Activated CD8-positive, alpha-beta T cell treated with anti-CD3 and anti-CD28 coated beads for 36 hours (primary cell): ENCODE measurements at regions of chr21 and their contacts with region 1.

Region 1: GRCh38 chr21:42537106-42537742 is 23.6 kb downstream of the SLC37A1 start:
- DNase-seq: peak; percentile 55
- ATAC-seq: peak; percentile 87
- H3K4me3 Mint-ChIP-seq: no peak overlapping the region
- H3K27ac Mint-ChIP-seq: no peak overlapping the region
- H3K4me1 Mint-ChIP-seq: peaks cover 12% of the 10 kb centered on the region
- H3K27me3 Mint-ChIP-seq: no peaks in the 10 kb centered on the region
- CTCF ChIP-seq: no peak

Region 2: GRCh38 chr21:42467140-42467983 is 69.9 kb before region 1 on chr21:
- CTCF ChIA-PET with region 1: interaction called, 22 read pairs
- POLR2A ChIA-PET with region 1: no interaction called
- intact Hi-C with region 1: no loop called
- DNase-seq: peak; percentile 51
- ATAC-seq: no peak
- H3K4me3 Mint-ChIP-seq: no peak overlapping the region
- H3K27ac Mint-ChIP-seq: no peak overlapping the region
- H3K4me1 Mint-ChIP-seq: peaks cover 41% of the 10 kb centered on the region
- H3K27me3 Mint-ChIP-seq: no peaks in the 10 kb centered on the region
- CTCF ChIP-seq: no peak

Region 3: DNA sequence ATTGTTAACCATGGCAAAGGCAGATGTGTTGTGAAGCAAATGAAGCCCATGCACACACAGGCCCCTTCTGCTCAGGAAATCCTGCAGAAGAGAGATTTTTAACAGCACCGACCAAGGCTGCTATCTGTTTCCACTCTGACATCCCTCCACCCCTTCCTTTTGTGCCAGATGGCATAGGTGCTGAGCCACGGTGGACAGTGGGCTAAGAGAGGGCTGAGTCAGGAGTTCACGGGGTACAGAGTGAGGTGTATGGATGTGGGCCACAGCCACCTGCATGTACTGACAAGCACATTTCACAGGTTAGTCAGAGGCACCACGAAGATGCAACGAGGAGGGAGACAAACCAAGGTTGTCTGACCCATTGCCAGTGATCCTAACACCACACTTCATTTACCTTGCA is 50.7 kb before region 1 on chr21:
- CTCF ChIA-PET with region 1: no interaction called
- POLR2A ChIA-PET with region 1: no interaction called
- intact Hi-C with region 1: no loop called
- DNase-seq: no peak
- ATAC-seq: peak; percentile 51
- H3K4me3 Mint-ChIP-seq: no peak overlapping the region
- H3K27ac Mint-ChIP-seq: no peak overlapping the region
- H3K4me1 Mint-ChIP-seq: no peaks in the 10 kb centered on the region
- H3K27me3 Mint-ChIP-seq: peaks cover 6% of the 10 kb centered on the region
- CTCF ChIP-seq: no peak

Region 4: GRCh38 chr21:42614811-42615659 is 77.8 kb after region 1 on chr21:
- CTCF ChIA-PET with region 1: no interaction called
- POLR2A ChIA-PET with region 1: no interaction called
- intact Hi-C with region 1: no loop called
- DNase-seq: peak; percentile 80
- ATAC-seq: peak; percentile 86
- H3K4me3 Mint-ChIP-seq: no peak overlapping the region
- H3K27ac Mint-ChIP-seq: no peak overlapping the region
- H3K4me1 Mint-ChIP-seq: peaks cover 4% of the 10 kb centered on the region
- H3K27me3 Mint-ChIP-seq: no peaks in the 10 kb centered on the region
- CTCF ChIP-seq: no peak